BJ (cell line): ENCODE measurements at regions of chr5 and their contacts with region 1.

Region 1: DNA sequence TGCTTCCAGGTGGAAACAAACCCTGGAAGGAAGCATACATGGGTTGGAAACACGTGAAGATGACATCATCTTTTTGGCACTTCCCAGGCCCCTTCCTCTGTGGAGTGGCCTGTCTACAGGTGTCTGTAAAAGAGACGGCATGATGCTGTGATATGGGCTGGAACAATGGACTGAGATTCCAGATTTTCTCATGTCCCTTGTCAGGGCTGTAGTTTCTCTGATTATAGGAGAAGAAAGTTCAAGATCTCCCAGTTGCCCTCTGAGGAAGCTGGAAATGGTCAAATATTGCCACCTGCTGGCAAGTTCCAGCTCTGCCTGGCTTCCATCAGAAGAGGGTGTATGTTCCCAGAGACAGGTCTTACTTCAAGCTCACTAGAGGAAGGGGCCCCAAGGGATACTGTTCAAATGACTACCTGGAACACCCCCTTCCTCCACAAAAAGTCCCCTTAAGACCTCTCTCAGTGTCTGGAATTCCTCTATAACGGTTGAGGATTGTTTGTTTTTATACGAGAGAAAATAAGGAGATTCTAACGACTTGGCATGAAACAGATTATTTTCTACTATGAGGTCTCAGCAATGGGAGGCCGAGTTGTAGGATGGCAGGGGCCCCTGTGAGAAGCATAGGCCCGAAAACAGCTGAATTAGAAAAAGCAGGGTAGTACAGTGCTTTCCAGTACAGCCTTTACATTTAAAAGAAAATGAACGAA is 7.3 kb upstream of the ANXA6 start:
- DNase-seq: no peak
- H3K4me3 ChIP-seq: no peak overlapping the region
- H3K27me3 ChIP-seq: peaks cover 1% of the 10 kb centered on the region; the same call in 1 of the 2 replicates
- CTCF ChIP-seq: peak; percentile 92

Region 2: DNA sequence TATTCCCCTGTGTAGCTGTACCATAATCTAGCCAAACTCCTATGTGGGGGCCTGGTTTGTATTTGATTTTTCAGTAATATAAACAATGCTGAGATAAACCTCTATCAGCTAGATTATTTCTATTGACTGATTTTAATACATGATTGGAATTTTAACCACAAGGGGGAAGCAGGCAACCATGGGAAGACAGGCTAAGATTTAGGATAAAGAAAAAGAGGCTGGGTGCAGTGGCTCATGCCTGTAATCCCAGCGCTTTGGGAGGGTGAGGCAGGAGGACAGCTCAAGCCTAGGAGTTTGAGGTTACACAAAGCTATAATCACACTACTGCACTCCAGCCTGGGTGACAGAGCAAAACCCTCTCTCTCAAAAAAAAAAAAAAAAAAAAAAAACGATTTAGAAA is 162.6 kb before region 1 on chr5:
- CTCF ChIA-PET with region 1: interaction called, 18 read pairs
- POLR2A ChIA-PET with region 1: no interaction called
- DNase-seq: no peak
- H3K4me3 ChIP-seq: no peak overlapping the region
- H3K27me3 ChIP-seq: peaks cover 2% of the 10 kb centered on the region
- CTCF ChIP-seq: peak; percentile 41

Region 3: DNA sequence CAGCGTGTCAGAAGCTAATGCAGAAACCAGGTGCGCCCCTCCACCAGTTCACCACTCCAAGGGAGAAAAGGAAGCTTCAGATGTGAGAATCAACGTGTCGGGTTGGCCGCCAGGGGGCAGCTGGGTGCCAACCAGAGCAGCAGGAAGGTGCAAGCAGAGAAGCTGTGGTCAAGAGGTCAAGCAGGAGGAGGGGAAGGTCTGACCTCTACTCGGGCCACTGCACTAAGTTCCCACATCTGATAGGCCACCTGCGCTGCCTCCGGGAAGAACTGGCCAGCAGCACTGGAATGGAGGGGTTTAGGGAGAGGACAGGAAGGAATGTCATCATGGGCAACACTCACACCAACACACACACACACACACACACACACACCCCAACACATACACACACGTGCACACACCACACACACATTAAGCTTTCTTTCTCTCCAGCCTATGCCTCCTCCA is 38.6 kb before region 1 on chr5:
- CTCF ChIA-PET with region 1: interaction called, 184 read pairs
- POLR2A ChIA-PET with region 1: no interaction called
- DNase-seq: no peak
- H3K4me3 ChIP-seq: no peak overlapping the region
- H3K27me3 ChIP-seq: no peaks in the 10 kb centered on the region
- CTCF ChIP-seq: peak; percentile 85

Region 4: GRCh38 chr5:151134238-151134637 is 30.6 kb before region 1 on chr5:
- CTCF ChIA-PET with region 1: interaction called, 184 read pairs
- POLR2A ChIA-PET with region 1: no interaction called
- DNase-seq: no peak
- H3K4me3 ChIP-seq: no peak overlapping the region
- H3K27me3 ChIP-seq: no peaks in the 10 kb centered on the region
- CTCF ChIP-seq: no peak

Region 5: GRCh38 chr5:151141535-151141934 is 23.3 kb before region 1 on chr5:
- CTCF ChIA-PET with region 1: interaction called, 20 read pairs
- POLR2A ChIA-PET with region 1: no interaction called
- DNase-seq: no peak
- H3K4me3 ChIP-seq: no peak overlapping the region
- H3K27me3 ChIP-seq: no peaks in the 10 kb centered on the region
- CTCF ChIP-seq: no peak

Region 6: GRCh38 chr5:151183451-151184245 is 18.8 kb after region 1 on chr5:
- CTCF ChIA-PET with region 1: interaction called, 11 read pairs
- POLR2A ChIA-PET with region 1: no interaction called
- DNase-seq: peak; percentile 4
- H3K4me3 ChIP-seq: no peak overlapping the region
- H3K27me3 ChIP-seq: peaks cover 1% of the 10 kb centered on the region; the same call in 1 of the 2 replicates
- CTCF ChIP-seq: no peak

Region 7: GRCh38 chr5:151239237-151239861 is 74.5 kb after region 1 on chr5:
- CTCF ChIA-PET with region 1: interaction called, 12 read pairs
- POLR2A ChIA-PET with region 1: no interaction called
- DNase-seq: no peak
- H3K4me3 ChIP-seq: no peak overlapping the region
- H3K27me3 ChIP-seq: peaks cover 7% of the 10 kb centered on the region
- CTCF ChIP-seq: peak; percentile 96

Region 8: DNA sequence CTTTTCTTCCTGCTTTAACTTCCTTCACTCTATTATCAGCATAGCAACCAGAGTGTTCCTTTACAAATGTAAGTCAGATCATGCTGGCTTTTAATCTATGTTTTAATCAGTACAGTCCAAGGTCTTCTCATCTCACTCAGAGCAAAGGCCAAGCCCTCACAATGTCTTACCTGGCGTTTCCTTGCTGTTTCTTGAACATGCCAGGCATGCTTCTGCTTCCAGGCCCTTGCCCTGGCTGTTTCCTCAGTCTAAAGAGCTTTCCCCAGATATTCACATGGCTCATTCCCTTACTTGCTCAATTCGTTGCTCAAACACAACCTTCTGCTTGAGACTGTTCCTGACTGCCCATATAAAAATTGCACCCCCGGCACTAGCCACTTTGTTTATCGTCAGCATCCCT is 881.5 kb after region 1 on chr5:
- CTCF ChIA-PET with region 1: no interaction called
- POLR2A ChIA-PET with region 1: no interaction called
- DNase-seq: no peak
- H3K4me3 ChIP-seq: no peak overlapping the region
- H3K27me3 ChIP-seq: no peaks in the 10 kb centered on the region
- CTCF ChIP-seq: no peak